GM12878 (cell line): ENCODE measurements at regions of chr1 and their contacts with region 1.

Region 1: GRCh38 chr1:6889875-6890480 is 104.7 kb downstream of the CAMTA1 start:
- DNase-seq: no peak
- ATAC-seq: peak; percentile 90
- H3K4me3 ChIP-seq: no peak overlapping the region
- H3K27ac ChIP-seq: no peak overlapping the region
- H3K4me1 ChIP-seq: peaks cover 11% of the 10 kb centered on the region
- H3K27me3 ChIP-seq: no peaks in the 10 kb centered on the region
- CTCF ChIP-seq: peak; percentile 74 to 84 (median 82)
- EP300 ChIP-seq: no peak
- POLR2A ChIP-seq: no peak
- RAD21 ChIP-seq: peak; percentile 75

Region 2: GRCh38 chr1:6784560-6785317 is 105.2 kb before region 1 on chr1:
- CTCF ChIA-PET with region 1: interaction called, 13 read pairs
- POLR2A ChIA-PET with region 1: no interaction called
- RAD21 ChIA-PET with region 1: interaction called, 8 read pairs
- SMC1A ChIA-PET with region 1: interaction called, 5 read pairs
- in situ Hi-C with region 1: no loop called
- intact Hi-C with region 1: no loop called
- DNase-seq: peak; percentile 99
- ATAC-seq: peak; percentile 92
- H3K4me3 ChIP-seq: peak overlapping the region; percentile 88
- H3K27ac ChIP-seq: peak overlapping the region; percentile 90
- H3K4me1 ChIP-seq: peaks cover 3% of the 10 kb centered on the region
- H3K27me3 ChIP-seq: no peaks in the 10 kb centered on the region
- CTCF ChIP-seq: no peak
- EP300 ChIP-seq: peak in 1 of 2 experiments; percentile 44; a peak in 3 of 4 replicates
- POLR2A ChIP-seq: peak; percentile 85
- RAD21 ChIP-seq: no peak

Region 3: GRCh38 chr1:6801966-6802365 is 88.0 kb before region 1 on chr1:
- CTCF ChIA-PET with region 1: interaction called, 63 read pairs
- POLR2A ChIA-PET with region 1: no interaction called
- RAD21 ChIA-PET with region 1: interaction called, 11 read pairs
- SMC1A ChIA-PET with region 1: interaction called, 17 read pairs
- in situ Hi-C with region 1: no loop called
- intact Hi-C with region 1: no loop called
- DNase-seq: no peak
- ATAC-seq: no peak; the same call in 2 of the 3 replicates
- H3K4me3 ChIP-seq: no peak overlapping the region
- H3K27ac ChIP-seq: no peak overlapping the region
- H3K4me1 ChIP-seq: peaks cover 8% of the 10 kb centered on the region
- H3K27me3 ChIP-seq: no peaks in the 10 kb centered on the region
- CTCF ChIP-seq: no peak
- EP300 ChIP-seq: no peak
- POLR2A ChIP-seq: no peak
- RAD21 ChIP-seq: no peak

Region 4: GRCh38 chr1:6832531-6833188 is 57.3 kb before region 1 on chr1:
- CTCF ChIA-PET with region 1: interaction called, 13 read pairs
- POLR2A ChIA-PET with region 1: no interaction called
- RAD21 ChIA-PET with region 1: interaction called, 3 read pairs
- SMC1A ChIA-PET with region 1: interaction called, 11 read pairs
- in situ Hi-C with region 1: no loop called
- intact Hi-C with region 1: no loop called
- DNase-seq: no peak
- ATAC-seq: peak; percentile 75
- H3K4me3 ChIP-seq: peak overlapping the region; percentile 4; the same call in 1 of the 2 replicates
- H3K27ac ChIP-seq: no peak overlapping the region
- H3K4me1 ChIP-seq: peaks cover 2% of the 10 kb centered on the region; the same call in 1 of the 2 replicates
- H3K27me3 ChIP-seq: no peaks in the 10 kb centered on the region
- CTCF ChIP-seq: no peak
- EP300 ChIP-seq: no peak
- POLR2A ChIP-seq: no peak
- RAD21 ChIP-seq: no peak

Region 5: GRCh38 chr1:6962478-6962995 is 72.6 kb after region 1 on chr1:
- CTCF ChIA-PET with region 1: no interaction called
- POLR2A ChIA-PET with region 1: no interaction called
- RAD21 ChIA-PET with region 1: no interaction called
- SMC1A ChIA-PET with region 1: no interaction called
- in situ Hi-C with region 1: no loop called
- intact Hi-C with region 1: no loop called
- DNase-seq: peak; percentile 20
- ATAC-seq: peak; percentile 69
- H3K4me3 ChIP-seq: no peak overlapping the region
- H3K27ac ChIP-seq: no peak overlapping the region
- H3K4me1 ChIP-seq: no peaks in the 10 kb centered on the region
- H3K27me3 ChIP-seq: peaks cover 0 to 3% of the 10 kb centered on the region in 2 experiments; a peak in 2 of 4 replicates
- CTCF ChIP-seq: no peak
- EP300 ChIP-seq: no peak
- POLR2A ChIP-seq: no peak
- RAD21 ChIP-seq: no peak